A673 (cell line): ENCODE measurements at regions of chr17 and their contacts with region 1.

Region 1: DNA sequence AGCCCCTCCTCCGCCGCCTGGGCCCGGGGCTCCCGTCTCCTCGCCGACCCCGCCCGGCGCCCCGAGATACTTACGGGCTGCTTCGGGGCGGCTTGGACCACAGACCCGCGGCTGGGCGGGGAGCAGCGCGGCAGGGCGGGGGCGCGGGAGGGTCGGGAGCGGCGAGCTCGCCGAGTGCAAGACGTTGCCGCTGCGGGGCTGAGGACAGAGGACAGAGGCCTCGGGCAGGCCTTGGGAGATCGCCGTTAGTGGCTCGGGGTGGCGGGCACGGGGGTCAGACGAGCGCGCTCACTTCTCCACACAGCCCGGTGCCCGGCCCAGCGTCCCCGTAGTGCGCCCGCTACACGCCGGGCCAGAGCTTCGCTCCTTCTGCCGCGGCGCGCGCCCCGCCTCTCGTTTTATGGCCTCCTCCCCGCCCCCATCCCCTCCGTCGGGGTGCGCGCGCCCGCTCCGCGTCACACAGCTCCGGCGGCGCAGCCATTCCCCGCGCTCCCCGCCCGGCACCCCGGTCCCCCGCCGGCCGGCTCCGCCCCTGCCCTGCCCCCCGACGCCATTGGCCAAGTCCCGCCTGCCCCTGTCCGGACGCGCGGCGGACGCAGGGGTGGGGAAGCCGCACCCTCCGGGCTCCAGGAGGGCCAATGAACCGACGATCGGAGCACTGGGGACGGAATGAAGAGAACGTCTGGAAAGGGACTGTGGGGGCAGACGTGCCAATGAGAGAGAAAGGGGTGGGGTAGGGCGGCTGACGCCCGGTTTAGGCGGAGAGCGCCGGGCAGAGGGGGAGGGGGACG is at the start of gene TOB1:
- DNase-seq: peak; percentile 96
- H3K4me3 ChIP-seq: peak within 1 kb of the TSS; percentile 58
- H3K27ac ChIP-seq: peak within 1 kb of the TSS; percentile 95
- H3K4me1 ChIP-seq: peaks cover 6% of the 10 kb centered on the region
- H3K27me3 ChIP-seq: no peaks in the 10 kb centered on the region
- CTCF ChIP-seq: no peak
- total RNA-seq, gene TOB1: 19.3 and 24.4 TPM in 2 replicates

Region 2: GRCh38 chr17:50707289-50708049 is 158.7 kb before region 1 on chr17 and contains the start of gene ANKRD40:
- CTCF ChIA-PET with region 1: no interaction called
- POLR2A ChIA-PET with region 1: interaction called, 12 read pairs
- intact Hi-C with region 1: no loop called
- DNase-seq: peak; percentile 96
- H3K4me3 ChIP-seq: peak within 1 kb of the TSS; percentile 66
- H3K27ac ChIP-seq: peak within 1 kb of the TSS; percentile 87
- H3K4me1 ChIP-seq: peaks cover 6% of the 10 kb centered on the region
- H3K27me3 ChIP-seq: no peaks in the 10 kb centered on the region
- CTCF ChIP-seq: no peak
- total RNA-seq, gene ANKRD40: 54.2 and 61.3 TPM in 2 replicates

Region 3: DNA sequence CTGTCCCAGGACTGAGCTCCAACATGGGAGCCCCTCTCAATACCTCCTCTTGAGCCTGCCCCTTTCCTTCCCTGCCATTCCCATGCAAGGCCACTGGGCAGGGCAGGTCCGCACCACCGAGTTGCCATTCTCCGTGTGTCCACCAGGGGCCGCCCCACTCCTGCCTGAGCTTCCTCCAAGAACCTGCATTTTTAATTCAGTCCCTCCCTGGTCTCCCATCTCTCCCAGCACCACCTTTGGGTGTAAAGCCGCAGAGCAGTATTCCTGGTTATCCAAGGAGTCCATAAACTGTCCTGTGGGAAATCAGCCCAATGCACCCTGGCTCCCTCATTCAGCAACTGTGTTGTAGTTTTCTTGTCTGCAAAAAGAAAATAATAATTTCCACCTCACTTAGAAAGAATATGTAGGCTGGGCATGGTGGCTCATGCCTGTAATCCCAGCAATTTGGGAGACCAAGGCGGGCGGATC is 83.0 kb before region 1 on chr17:
- CTCF ChIA-PET with region 1: interaction called, 7 read pairs
- POLR2A ChIA-PET with region 1: interaction called, 18 read pairs
- intact Hi-C with region 1: no loop called
- DNase-seq: peak; percentile 90
- H3K4me3 ChIP-seq: no peak overlapping the region
- H3K27ac ChIP-seq: no peak overlapping the region
- H3K4me1 ChIP-seq: no peaks in the 10 kb centered on the region
- H3K27me3 ChIP-seq: no peaks in the 10 kb centered on the region
- CTCF ChIP-seq: peak; percentile 99

Region 4: GRCh38 chr17:50853015-50853615 is 13.1 kb before region 1 on chr17:
- CTCF ChIA-PET with region 1: interaction called, 12 read pairs
- POLR2A ChIA-PET with region 1: interaction called, 4 read pairs
- intact Hi-C with region 1: no loop called
- DNase-seq: no peak
- H3K4me3 ChIP-seq: no peak overlapping the region
- H3K27ac ChIP-seq: no peak overlapping the region
- H3K4me1 ChIP-seq: no peaks in the 10 kb centered on the region
- H3K27me3 ChIP-seq: no peaks in the 10 kb centered on the region
- CTCF ChIP-seq: no peak

Region 5: GRCh38 chr17:50909765-50910605 is 43.8 kb after region 1 on chr17:
- CTCF ChIA-PET with region 1: no interaction called
- POLR2A ChIA-PET with region 1: no interaction called
- intact Hi-C with region 1: loop called (anchors 5 kb)
- DNase-seq: no peak
- H3K4me3 ChIP-seq: no peak overlapping the region
- H3K27ac ChIP-seq: no peak overlapping the region
- H3K4me1 ChIP-seq: peaks cover 3% of the 10 kb centered on the region
- H3K27me3 ChIP-seq: no peaks in the 10 kb centered on the region
- CTCF ChIP-seq: no peak

Region 6: DNA sequence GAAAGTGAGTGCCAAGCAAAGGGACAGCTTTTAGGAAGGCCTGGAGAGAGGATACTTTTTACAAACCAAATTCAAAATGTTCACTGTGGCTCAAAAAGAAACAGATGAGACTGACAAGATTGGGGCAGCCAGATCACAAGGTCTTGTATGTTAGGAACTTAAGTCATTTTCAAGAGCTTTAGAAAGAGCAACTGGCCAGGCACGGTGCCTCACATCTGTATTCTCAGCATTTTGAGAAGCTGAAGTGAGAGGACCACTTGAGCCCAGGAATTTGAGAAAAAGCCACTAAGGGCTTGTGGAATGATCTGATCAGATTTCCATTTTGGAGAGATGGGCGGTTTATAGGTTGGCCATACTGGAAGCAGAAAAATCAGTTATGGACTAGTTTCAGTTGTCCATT is 237.3 kb after region 1 on chr17:
- CTCF ChIA-PET with region 1: no interaction called
- POLR2A ChIA-PET with region 1: no interaction called
- intact Hi-C with region 1: no loop called
- DNase-seq: no peak
- H3K4me3 ChIP-seq: no peak overlapping the region
- H3K27ac ChIP-seq: no peak overlapping the region
- H3K4me1 ChIP-seq: no peaks in the 10 kb centered on the region
- H3K27me3 ChIP-seq: no peaks in the 10 kb centered on the region
- CTCF ChIP-seq: no peak

Region 7: DNA sequence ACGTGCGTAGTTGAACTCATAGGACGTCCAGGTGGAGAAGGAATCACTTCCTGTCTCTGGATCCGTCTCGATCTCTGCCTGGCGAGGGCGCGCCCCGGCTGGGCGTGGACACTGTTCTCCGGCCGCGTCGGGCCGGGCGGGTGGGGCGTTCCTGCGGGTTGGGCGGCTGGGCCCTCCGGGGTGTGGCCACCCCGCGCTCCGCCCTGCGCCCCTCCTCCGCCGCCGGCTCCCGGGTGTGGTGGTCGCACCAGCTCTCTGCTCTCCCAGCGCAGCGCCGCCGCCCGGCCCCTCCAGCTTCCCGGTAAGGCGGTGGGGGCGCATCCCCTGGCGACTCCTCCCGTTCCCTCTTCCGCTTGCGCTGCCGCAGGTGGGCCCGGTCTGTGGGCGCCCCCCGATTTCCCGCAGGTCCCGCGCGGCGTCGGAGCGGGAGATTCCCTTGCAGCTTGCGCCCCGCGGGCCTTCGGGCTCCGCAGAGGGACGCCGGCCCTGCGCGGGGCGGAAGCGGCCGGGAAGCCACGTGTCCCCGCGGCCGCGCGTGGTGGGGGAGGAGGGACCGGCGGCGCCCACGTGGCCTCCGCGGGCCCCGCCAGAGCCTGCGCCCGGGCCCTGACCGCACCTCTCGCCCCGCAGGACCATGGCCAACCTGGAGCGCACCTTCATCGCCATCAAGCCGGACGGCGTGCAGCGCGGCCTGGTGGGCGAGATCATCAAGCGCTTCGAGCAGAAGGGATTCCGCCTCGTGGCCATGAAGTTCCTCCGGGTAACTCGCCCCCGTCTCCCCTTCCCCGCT is 300.2 kb after region 1 on chr17 and contains the start of gene NME2:
- CTCF ChIA-PET with region 1: no interaction called
- POLR2A ChIA-PET with region 1: interaction called, 3 read pairs
- intact Hi-C with region 1: loop called (anchors 5 kb)
- DNase-seq: peak; percentile 82
- H3K4me3 ChIP-seq: peak within 1 kb of the TSS; percentile 64
- H3K27ac ChIP-seq: peak within 1 kb of the TSS; percentile 82
- H3K4me1 ChIP-seq: peaks cover 17% of the 10 kb centered on the region
- H3K27me3 ChIP-seq: no peaks in the 10 kb centered on the region
- CTCF ChIP-seq: no peak
- total RNA-seq, gene NME2: 776 and 780 TPM in 2 replicates

Region 8: GRCh38 chr17:51238255-51238887 is 372.2 kb after region 1 on chr17:
- CTCF ChIA-PET with region 1: interaction called, 12 read pairs
- POLR2A ChIA-PET with region 1: no interaction called
- intact Hi-C with region 1: no loop called
- DNase-seq: no peak
- H3K4me3 ChIP-seq: no peak overlapping the region
- H3K27ac ChIP-seq: no peak overlapping the region
- H3K4me1 ChIP-seq: no peaks in the 10 kb centered on the region
- H3K27me3 ChIP-seq: no peaks in the 10 kb centered on the region
- CTCF ChIP-seq: no peak